Activated CD4-positive, alpha-beta memory T cell treated with anti-CD3 and anti-CD28 coated beads for 36 hours (primary cell): ENCODE measurements at regions of chr2 and their contacts with region 1.

Region 1: GRCh38 chr2:32063310-32064161 is at the start of gene SPAST:
- DNase-seq: peak; percentile 98
- H3K4me3 Mint-ChIP-seq: peak within 1 kb of the TSS; percentile 97
- H3K27ac Mint-ChIP-seq: peak within 1 kb of the TSS; percentile 90
- H3K4me1 Mint-ChIP-seq: peaks cover 22% of the 10 kb centered on the region
- H3K27me3 Mint-ChIP-seq: no peaks in the 10 kb centered on the region
- total RNA-seq, gene SPAST: 15.3 to 15.8 TPM

Region 2: DNA sequence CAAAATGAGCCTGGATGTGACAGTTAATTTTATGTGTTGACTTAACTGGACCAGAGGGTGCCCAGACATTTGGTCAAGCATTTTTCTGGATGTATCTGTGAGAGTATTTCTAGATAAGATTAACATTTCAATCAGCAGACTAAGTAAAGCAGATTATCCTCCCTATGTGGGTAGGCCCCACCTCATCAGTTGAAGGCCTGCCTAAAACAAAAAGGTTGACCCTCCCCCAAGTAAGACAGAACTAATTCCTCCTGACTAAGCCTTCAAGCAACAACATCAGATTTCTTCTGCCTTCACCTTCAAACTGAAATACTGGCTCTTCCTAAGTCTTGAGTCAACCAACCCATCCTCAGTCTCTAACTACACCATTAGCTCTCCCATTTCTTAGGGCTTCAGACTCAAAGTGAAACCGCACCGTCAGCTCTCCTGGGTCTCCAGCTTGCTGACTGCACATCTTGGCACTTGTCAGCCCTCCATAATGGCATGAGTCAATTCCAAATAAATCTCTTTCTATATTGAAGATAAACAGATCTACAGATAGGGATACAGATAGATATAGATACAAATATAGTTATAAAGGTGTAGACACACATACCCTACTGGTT is 100.7 kb before region 1 on chr2:
- CTCF ChIA-PET with region 1: no interaction called
- POLR2A ChIA-PET with region 1: no interaction called
- intact Hi-C with region 1: loop called (anchors 5 kb)
- DNase-seq: peak; percentile 83
- H3K4me3 Mint-ChIP-seq: no peak overlapping the region
- H3K27ac Mint-ChIP-seq: peak overlapping the region; percentile 75
- H3K4me1 Mint-ChIP-seq: peaks cover 51% of the 10 kb centered on the region
- H3K27me3 Mint-ChIP-seq: no peaks in the 10 kb centered on the region

Region 3: GRCh38 chr2:32039447-32040219 is 23.9 kb before region 1 on chr2 and contains the start of gene DPY30:
- CTCF ChIA-PET with region 1: interaction called, 6 read pairs
- POLR2A ChIA-PET with region 1: interaction called, 36 read pairs
- intact Hi-C with region 1: loop called (anchors 1 kb)
- DNase-seq: peak; percentile 94
- H3K4me3 Mint-ChIP-seq: peak within 1 kb of the TSS; percentile 81
- H3K27ac Mint-ChIP-seq: peak within 1 kb of the TSS; percentile 88
- H3K4me1 Mint-ChIP-seq: peaks cover 12% of the 10 kb centered on the region
- H3K27me3 Mint-ChIP-seq: no peaks in the 10 kb centered on the region
- total RNA-seq, gene DPY30: 81.6 to 89.2 TPM

Region 4: GRCh38 chr2:32277674-32278482 is 214.3 kb after region 1 on chr2 and contains the start of gene YIPF4:
- CTCF ChIA-PET with region 1: no interaction called
- POLR2A ChIA-PET with region 1: no interaction called
- intact Hi-C with region 1: loop called (anchors 2 kb)
- DNase-seq: peak; percentile 93
- H3K4me3 Mint-ChIP-seq: peak within 1 kb of the TSS; percentile 85
- H3K27ac Mint-ChIP-seq: peak within 1 kb of the TSS; percentile 87
- H3K4me1 Mint-ChIP-seq: peaks cover 22% of the 10 kb centered on the region
- H3K27me3 Mint-ChIP-seq: no peaks in the 10 kb centered on the region
- total RNA-seq, gene YIPF4: 43.5 to 44.3 TPM

Region 5: DNA sequence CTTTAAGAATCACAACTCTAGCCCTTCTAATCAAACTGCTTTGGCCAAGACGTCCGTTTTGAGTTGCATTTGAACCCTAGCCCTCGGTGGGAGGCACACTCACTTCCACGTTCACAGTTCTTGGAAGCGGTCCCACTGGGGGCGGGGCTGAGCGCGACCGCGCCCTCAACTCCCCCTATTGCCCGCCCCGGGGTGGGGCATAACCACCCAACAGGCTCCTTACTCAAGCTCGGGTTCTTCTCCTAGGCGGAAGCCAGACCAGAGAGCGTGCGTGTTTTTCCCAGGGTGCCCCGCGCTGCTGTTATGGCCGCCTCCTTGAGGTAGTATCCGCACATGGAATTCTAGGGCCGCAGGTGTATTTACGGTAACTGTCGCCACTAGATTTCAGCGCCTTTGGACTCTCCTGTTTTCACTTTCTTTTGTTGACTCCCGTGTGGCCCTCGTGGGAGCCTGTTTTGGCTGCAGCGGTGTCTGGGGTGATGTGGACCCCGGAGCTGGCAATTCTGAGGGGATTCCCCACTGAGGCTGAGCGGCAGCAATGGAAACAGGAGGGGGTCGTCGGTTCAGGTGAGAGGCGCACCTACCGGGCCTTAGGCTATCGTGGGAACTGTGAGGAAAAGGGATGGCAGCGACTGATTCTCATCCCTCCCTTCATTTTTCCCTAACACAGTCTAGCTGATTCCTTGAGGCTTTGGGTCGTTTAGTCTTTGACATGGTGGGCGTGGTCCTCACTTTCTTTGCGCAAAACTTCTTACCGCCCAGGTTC is 564.5 kb after region 1 on chr2 and contains the start of gene TTC27:
- CTCF ChIA-PET with region 1: no interaction called
- POLR2A ChIA-PET with region 1: no interaction called
- intact Hi-C with region 1: loop called (anchors 2 kb)
- DNase-seq: peak; percentile 97
- H3K4me3 Mint-ChIP-seq: peak within 1 kb of the TSS; percentile 87
- H3K27ac Mint-ChIP-seq: peak within 1 kb of the TSS; percentile 84
- H3K4me1 Mint-ChIP-seq: peaks cover 29% of the 10 kb centered on the region
- H3K27me3 Mint-ChIP-seq: no peaks in the 10 kb centered on the region
- total RNA-seq, gene TTC27: 27.9 to 29.8 TPM